ENCODE measurements at regions of chr11 and their contacts with region 1.

Region 1: DNA sequence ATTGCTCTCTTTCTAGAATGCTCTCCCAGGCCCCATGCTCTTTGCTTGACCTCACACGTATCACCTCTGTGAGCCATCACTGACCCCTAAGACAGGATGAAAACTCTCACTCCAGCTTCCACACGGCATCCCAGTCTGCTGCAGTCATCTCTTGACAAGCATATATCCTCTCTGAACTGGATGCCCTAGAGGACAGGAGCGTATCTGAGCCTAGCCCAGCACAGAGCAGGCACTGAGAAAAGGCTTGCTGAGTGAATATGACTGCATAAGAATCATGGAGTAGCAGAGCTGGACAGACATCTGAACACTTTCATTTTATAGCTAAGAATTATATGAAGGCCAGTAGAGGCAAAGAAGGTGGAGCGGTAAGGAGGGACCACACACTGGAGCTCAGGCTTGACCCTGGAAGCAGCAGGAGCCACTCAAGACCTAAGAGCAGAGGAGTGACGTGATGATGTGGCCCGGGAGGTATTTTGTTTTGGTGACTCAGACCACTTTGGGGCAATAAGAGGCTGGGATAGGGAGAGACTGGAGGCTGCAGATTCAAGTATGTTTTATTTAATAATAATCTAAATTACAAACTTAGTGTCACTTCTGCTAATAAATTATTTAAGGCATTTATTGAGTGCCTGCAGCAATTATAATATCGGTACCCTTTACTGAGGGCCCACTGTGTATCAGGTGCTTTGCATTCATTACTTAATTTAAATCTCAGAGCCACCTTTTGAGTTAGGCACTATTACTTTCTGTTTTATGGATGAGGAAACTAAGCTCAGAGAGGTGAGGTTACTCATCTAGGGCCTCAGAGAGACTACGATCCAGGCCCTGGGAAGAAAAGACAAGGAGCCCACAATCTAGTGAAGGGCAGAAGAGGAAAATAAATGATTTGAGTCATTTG is 42.6 kb downstream of the MAP6 start:
- DNase-seq: no peak
- H3K4me3 ChIP-seq: no peak overlapping the region
- H3K27ac ChIP-seq: no peak overlapping the region
- H3K4me1 ChIP-seq: no peaks in the 10 kb centered on the region
- H3K27me3 ChIP-seq: no peaks in the 10 kb centered on the region
- CTCF ChIP-seq: no peak
- POLR2A ChIP-seq: no peak

Region 2: GRCh38 chr11:74739546-74740270 is 886.5 kb before region 1 on chr11:
- intact Hi-C with region 1: no loop called
- DNase-seq: no peak
- H3K4me3 ChIP-seq: no peak overlapping the region
- H3K27ac ChIP-seq: no peak overlapping the region
- H3K4me1 ChIP-seq: no peaks in the 10 kb centered on the region
- H3K27me3 ChIP-seq: peaks cover 0 to 5% of the 10 kb centered on the region in 2 donors
- CTCF ChIP-seq: peak; percentile 73 to 75 (median 74)
- POLR2A ChIP-seq: no peak

Region 3: GRCh38 chr11:75667831-75668450 is 41.7 kb after region 1 on chr11:
- intact Hi-C with region 1: loop called (anchors 1 kb)
- DNase-seq: no peak
- H3K4me3 ChIP-seq: peak overlapping the region; percentile 44 to 71 (median 60)
- H3K27ac ChIP-seq: no peak overlapping the region
- H3K4me1 ChIP-seq: peaks cover 4 to 7% of the 10 kb centered on the region in 2 donors
- H3K27me3 ChIP-seq: peaks cover 0 to 13% of the 10 kb centered on the region in 2 donors
- CTCF ChIP-seq: no peak
- POLR2A ChIP-seq: no peak

Measured in breast epithelium (tissue), 4 donors.